CD8-positive, alpha-beta T cell (primary cell): ENCODE measurements at regions of chr16 and their contacts with region 1.

Region 1: GRCh38 chr16:48353565-48354163 is 31.5 kb downstream of the SIAH1 start:
- DNase-seq: peak; percentile 37 to 88 (median 69)
- ATAC-seq: peak; percentile 97
- H3K4me3 ChIP-seq: no peak overlapping the region
- H3K4me3 Mint-ChIP-seq: no peak overlapping the region
- H3K27ac ChIP-seq: no peak overlapping the region
- H3K27ac Mint-ChIP-seq: peak overlapping the region; percentile 18
- H3K4me1 ChIP-seq: peaks cover 3% of the 10 kb centered on the region
- H3K4me1 Mint-ChIP-seq: peaks cover 8% of the 10 kb centered on the region
- H3K27me3 ChIP-seq: no peaks in the 10 kb centered on the region
- H3K27me3 Mint-ChIP-seq: no peaks in the 10 kb centered on the region
- CTCF ChIP-seq: peak; percentile 92

Region 2: GRCh38 chr16:48365581-48366164 is 12.0 kb after region 1 on chr16:
- CTCF ChIA-PET with region 1: interaction called, 6 read pairs
- POLR2A ChIA-PET with region 1: no interaction called
- intact Hi-C with region 1: loop called in 1 of 2 experiments (anchors 1 kb)
- DNase-seq: peak; percentile 48 to 83 (median 69)
- ATAC-seq: peak; percentile 85
- H3K4me3 ChIP-seq: peak overlapping the region; percentile 65 to 83
- H3K4me3 Mint-ChIP-seq: peak overlapping the region; percentile 89
- H3K27ac ChIP-seq: peak overlapping the region; percentile 63 to 89
- H3K27ac Mint-ChIP-seq: peak overlapping the region; percentile 97
- H3K4me1 ChIP-seq: peaks cover 25% of the 10 kb centered on the region
- H3K4me1 Mint-ChIP-seq: peaks cover 40% of the 10 kb centered on the region
- H3K27me3 ChIP-seq: no peaks in the 10 kb centered on the region
- H3K27me3 Mint-ChIP-seq: no peaks in the 10 kb centered on the region
- CTCF ChIP-seq: no peak

Region 3: DNA sequence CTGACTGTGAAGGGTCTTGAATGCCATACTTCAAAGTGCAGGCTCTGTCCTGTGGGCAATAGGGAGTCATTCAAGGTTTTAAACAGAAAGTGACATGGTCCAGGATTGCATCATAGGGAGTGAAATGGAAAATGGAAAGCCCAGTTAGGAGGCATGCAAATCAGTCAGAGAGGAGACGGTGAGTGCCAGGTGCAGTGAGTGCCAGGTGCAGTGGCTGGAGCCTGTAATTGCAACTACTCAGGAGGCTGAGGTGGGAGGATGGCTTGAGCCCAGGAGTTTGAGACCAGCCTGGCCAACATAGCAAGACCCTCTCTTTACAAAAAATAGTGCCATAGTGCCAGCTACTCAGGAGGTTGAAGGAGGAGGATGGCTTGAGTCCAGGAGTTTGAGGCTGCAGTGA is 66.8 kb after region 1 on chr16:
- CTCF ChIA-PET with region 1: no interaction called
- POLR2A ChIA-PET with region 1: no interaction called
- intact Hi-C with region 1: no loop called
- DNase-seq: no peak
- ATAC-seq: no peak
- H3K4me3 ChIP-seq: no peak overlapping the region
- H3K4me3 Mint-ChIP-seq: no peak overlapping the region
- H3K27ac ChIP-seq: no peak overlapping the region
- H3K27ac Mint-ChIP-seq: no peak overlapping the region
- H3K4me1 ChIP-seq: no peaks in the 10 kb centered on the region
- H3K4me1 Mint-ChIP-seq: no peaks in the 10 kb centered on the region
- H3K27me3 ChIP-seq: no peaks in the 10 kb centered on the region
- H3K27me3 Mint-ChIP-seq: no peaks in the 10 kb centered on the region
- CTCF ChIP-seq: no peak

Region 4: DNA sequence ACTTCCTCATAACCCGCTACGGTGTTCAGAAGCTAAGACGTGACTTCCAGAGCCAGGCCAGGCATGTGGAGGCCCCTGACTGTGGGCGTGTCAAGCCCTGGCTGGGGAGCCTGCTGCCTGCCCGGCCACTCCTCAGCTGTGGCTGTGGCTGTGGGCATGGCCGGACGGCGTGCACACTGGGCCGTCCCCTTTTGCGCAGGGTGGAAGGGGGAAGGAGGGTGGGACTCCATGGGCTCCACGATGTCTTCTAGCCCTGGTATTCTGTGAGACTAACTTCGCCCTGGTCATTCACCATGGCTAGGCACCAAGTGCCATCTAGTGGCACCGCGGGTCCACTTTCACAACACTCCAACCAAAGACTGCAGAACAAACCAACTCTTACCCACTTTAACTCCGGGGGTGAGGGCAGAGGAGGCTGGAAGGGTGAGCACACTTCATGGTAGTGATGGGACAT is 188.4 kb after region 1 on chr16:
- CTCF ChIA-PET with region 1: interaction called, 5 read pairs
- POLR2A ChIA-PET with region 1: no interaction called
- intact Hi-C with region 1: loop called (anchors 1 to 5 kb)
- DNase-seq: peak in 3 of 9 experiments; percentile 37 to 51 (median 47)
- ATAC-seq: peak; percentile 49
- H3K4me3 ChIP-seq: no peak overlapping the region
- H3K4me3 Mint-ChIP-seq: no peak overlapping the region
- H3K27ac ChIP-seq: no peak overlapping the region
- H3K27ac Mint-ChIP-seq: no peak overlapping the region
- H3K4me1 ChIP-seq: peaks cover 9% of the 10 kb centered on the region
- H3K4me1 Mint-ChIP-seq: peaks cover 11% of the 10 kb centered on the region
- H3K27me3 ChIP-seq: no peaks in the 10 kb centered on the region
- H3K27me3 Mint-ChIP-seq: no peaks in the 10 kb centered on the region
- CTCF ChIP-seq: peak; percentile 14